ENCODE measurements at regions of chr6 and their contacts with region 1.

Region 1: GRCh38 chr6:108541838-108542759 is 18.6 kb upstream of the FOXO3 start:
- DNase-seq: peak; percentile 62 to 81 (median 70)
- ATAC-seq: peak; percentile 76 to 81
- H3K4me3 ChIP-seq: no peak overlapping the region
- H3K27ac ChIP-seq: no peak overlapping the region
- H3K4me1 ChIP-seq: no peaks in the 10 kb centered on the region
- H3K27me3 ChIP-seq: no peaks in the 10 kb centered on the region

Region 2: DNA sequence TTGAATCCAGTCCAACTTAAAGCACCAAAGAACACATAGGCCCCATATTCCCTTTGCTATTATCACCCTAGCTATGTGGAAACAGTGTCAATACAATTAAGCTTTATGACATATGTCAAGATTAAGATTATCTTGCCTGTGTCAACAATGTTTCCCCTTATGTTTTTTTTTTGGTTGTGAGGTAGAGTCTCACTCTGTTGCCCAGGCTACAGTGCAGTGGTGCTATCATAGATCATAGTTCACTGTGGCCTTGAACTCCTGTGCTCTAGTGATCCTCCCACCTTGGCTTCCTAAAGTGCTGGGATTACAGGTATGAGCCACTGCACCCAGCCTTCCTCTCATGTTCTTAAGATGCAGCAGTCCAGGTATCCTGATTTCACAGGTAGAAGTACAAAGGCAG is 229.5 kb before region 1 on chr6:
- intact Hi-C with region 1: no loop called
- DNase-seq: no peak
- ATAC-seq: no peak
- H3K4me3 ChIP-seq: no peak overlapping the region
- H3K27ac ChIP-seq: no peak overlapping the region
- H3K4me1 ChIP-seq: peaks cover 2% of the 10 kb centered on the region
- H3K27me3 ChIP-seq: no peaks in the 10 kb centered on the region

Region 3: GRCh38 chr6:108661430-108661829 is 119.3 kb after region 1 on chr6:
- intact Hi-C with region 1: no loop called
- DNase-seq: no peak
- ATAC-seq: no peak
- H3K4me3 ChIP-seq: no peak overlapping the region
- H3K27ac ChIP-seq: no peak overlapping the region
- H3K4me1 ChIP-seq: peaks cover 6% of the 10 kb centered on the region
- H3K27me3 ChIP-seq: no peaks in the 10 kb centered on the region

Region 4: DNA sequence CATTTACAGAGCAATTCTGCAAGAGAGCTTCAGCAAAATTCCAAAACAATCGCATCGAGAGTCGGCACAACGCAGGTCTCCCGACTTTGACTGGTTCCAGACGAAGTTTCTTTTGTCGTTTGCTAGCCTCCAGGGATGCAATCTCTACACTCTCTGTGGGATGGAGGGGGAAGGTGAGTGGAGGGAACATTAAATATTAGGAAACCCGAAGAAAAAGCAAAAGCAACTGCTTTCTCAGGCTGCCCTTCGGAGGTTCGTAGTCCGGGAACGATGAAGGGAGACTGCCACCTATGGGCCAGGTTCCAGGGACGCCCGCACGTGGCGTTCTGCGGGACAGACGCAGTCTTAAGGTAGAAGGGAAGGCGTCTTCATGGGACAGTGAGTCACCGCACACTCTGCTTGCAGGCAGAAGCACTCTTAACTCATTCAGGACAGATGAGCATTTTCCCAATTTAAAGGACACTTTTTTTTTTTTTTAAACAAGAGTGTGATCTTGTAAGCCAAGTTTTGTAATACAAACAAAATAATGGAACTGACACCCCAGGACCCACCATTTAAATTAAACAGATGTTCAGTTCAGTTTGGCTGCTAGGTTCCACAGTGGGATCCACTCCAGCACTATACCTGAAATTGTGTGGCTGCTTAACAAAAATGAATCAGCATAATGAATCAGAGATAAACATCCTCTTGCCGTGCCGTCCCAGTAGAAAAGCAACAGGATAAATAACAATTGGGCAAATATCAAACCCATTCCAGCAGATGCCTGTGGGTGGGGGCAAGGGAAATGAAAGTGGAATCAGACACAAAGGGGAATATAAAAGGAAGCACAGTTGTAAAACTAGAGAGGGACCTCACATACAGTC is 240.3 kb after region 1 on chr6:
- intact Hi-C with region 1: loop called in 2 of 4 experiments (anchors 5 kb)
- DNase-seq: peak; percentile 82 to 94 (median 90)
- ATAC-seq: peak; percentile 94 to 95
- H3K4me3 ChIP-seq: peak overlapping the region; percentile 63
- H3K27ac ChIP-seq: no peak overlapping the region
- H3K4me1 ChIP-seq: no peaks in the 10 kb centered on the region
- H3K27me3 ChIP-seq: no peaks in the 10 kb centered on the region

Region 5: DNA sequence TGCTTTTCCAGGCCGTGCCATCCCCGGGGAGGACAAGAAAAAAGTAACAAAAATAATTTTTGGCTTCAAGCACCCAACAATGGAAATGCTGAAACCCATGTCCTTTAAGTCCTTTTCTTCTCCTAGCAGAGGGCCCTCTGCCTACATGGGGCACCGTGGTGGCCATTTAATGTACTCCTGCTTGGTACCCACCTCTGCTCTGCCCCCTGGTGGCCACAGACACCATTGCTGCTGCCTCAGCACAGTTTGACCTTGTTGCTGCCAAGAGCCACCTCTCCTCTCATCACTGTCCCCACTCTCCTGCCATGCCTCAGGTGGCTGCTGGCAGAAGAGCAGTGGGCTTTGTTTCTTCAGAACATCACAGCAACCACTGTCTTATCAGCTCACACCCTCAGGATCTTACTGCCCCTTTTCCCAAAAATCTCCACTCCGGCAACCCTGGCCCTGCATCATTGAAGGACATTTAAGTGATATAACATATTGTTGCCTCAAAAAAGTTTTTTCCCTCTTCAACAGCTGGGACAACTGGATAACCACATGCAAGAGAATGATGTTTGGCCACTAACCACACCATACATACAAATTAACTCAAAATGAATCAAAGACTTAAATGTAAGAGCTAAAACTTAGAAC is 293.2 kb after region 1 on chr6:
- intact Hi-C with region 1: loop called (anchors 1 to 10 kb)
- DNase-seq: peak; percentile 87 to 95 (median 94)
- ATAC-seq: peak; percentile 92 to 95
- H3K4me3 ChIP-seq: no peak overlapping the region
- H3K27ac ChIP-seq: no peak overlapping the region
- H3K4me1 ChIP-seq: no peaks in the 10 kb centered on the region
- H3K27me3 ChIP-seq: no peaks in the 10 kb centered on the region

Region 6: DNA sequence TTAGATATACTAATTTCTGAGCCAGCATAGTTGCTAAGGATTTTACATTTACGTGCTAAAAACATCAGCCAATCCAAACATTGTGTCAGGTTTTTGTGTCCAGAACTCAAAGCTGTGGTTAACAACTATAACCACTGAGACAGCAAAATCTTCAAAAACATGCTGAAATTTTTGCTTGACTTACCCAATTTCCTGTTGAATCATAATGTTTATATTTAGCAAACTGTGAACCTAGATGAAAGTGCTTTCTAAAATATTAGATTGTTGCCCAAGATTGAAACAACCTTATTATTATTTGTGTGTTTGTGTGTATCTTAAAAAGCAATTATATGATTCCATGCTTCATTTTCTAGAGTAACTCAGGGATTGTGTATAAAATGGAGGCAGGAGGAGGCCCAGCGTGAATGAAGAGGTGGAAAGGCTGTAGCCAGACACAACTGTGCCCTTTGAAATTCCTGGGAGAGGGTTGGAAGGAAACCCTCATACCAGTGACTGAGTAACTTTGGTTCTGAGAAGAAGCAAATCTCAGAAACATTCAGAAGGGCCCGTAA is 354.1 kb after region 1 on chr6:
- intact Hi-C with region 1: loop called in 3 of 4 experiments (anchors 2 to 5 kb)
- DNase-seq: no peak
- ATAC-seq: peak in 1 of 2 donors; percentile 17
- H3K4me3 ChIP-seq: no peak overlapping the region
- H3K27ac ChIP-seq: peak overlapping the region; percentile 75
- H3K4me1 ChIP-seq: peaks cover 2% of the 10 kb centered on the region
- H3K27me3 ChIP-seq: no peaks in the 10 kb centered on the region

Region 7: DNA sequence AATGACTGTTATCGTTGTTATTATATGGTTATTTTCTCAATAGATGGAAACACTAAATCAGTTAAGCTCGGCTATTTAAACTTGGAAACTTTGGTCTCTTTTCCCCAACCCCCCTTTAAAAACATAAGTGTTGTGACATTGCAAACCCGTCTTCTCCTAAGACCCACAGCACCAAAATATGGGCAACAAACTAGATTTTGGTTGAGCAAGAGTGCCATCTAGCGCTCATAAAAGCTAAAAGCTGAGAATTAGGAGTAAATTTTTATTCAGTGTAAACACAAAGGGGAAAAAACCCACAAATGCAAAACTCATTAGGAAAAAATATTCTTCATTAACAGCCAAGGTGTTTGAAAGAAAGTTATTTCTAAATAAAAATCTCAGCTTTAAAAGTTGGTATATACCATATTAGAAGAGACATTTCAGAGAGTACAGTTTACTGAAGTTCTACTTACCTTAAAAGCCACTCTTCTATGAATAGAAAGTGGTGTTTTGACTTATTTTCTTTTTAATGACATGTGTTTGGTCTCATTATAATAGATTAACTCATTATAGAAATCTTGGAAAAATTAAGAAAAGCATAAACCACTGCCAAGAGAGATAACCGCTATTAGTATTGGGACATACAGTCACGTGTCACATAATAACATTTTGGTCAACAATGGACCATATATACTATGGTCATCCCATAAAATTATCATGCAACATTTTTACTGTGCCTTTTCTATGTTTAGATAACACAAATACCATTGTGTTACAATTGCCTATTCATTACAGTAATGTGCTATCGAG is 531.4 kb after region 1 on chr6:
- intact Hi-C with region 1: loop called in 3 of 4 experiments (anchors 5 to 10 kb)
- DNase-seq: no peak
- ATAC-seq: peak; percentile 58 to 64
- H3K4me3 ChIP-seq: no peak overlapping the region
- H3K27ac ChIP-seq: no peak overlapping the region
- H3K4me1 ChIP-seq: peaks cover 4% of the 10 kb centered on the region
- H3K27me3 ChIP-seq: no peaks in the 10 kb centered on the region